Lower leg skin (tissue), 4 donors: ENCODE measurements at regions of chr17 and their contacts with region 1.

Region 1: DNA sequence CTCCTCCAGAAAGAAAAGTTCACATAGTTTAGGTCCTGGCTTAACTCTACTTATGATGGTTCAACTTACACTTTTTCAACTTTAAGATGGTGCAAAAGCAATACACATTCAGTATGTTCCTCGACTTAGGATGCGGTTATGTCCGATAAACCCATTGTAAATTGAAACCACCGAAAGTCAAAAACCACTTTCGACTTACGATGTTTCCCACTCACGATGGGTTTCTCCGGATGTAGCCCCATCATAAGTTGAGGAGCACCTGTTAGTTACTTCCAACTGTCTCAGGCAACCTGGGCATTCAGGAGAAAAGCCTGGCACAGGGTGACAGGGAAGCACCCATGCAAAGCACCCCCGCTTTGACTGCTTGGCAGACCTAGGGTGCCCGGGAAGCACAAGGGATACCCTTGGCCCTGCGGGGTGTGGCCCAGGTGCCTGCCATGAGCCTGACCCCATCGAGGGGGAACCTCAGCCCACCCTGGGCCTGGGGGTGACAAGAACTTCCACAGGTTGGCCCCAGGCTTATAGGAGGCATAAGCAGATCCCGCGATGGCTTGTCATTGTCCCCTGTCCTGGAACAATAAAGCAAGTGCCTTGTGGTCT is 14.0 kb downstream of the UNC119 start:
- DNase-seq: no peak
- H3K4me3 ChIP-seq: no peak overlapping the region
- CTCF ChIP-seq: no peak
- POLR2A ChIP-seq: no peak

Region 2: GRCh38 chr17:28494445-28495188 is 43.8 kb before region 1 on chr17:
- intact Hi-C with region 1: loop called (anchors 2 kb)
- DNase-seq: peak; percentile 63 to 94
- H3K4me3 ChIP-seq: no peak overlapping the region
- CTCF ChIP-seq: no peak
- POLR2A ChIP-seq: no peak